ENCODE measurements at regions of chr1 and their contacts with region 1.

Region 1: DNA sequence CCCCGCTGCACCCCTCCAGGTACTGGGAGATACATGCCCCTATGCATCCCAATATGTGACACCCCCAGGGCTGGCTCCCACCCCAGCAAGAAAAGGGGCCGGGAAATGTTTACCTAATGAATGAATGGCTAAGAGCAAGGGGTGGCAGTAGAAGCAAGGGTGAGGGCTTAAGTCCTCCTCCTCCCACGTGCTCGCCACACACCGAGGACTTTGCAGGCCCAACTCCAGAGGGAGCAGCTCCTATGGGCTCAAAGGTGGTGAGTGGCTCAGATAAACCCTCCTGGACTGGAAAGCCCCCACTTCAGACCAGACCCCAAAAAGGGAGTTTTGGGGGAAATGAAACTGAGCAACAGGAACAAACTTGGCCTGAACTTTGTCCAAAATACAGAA is 11.4 kb downstream of the SLC45A3 start:
- DNase-seq: no peak
- H3K4me3 ChIP-seq: no peak overlapping the region
- H3K27ac ChIP-seq: no peak overlapping the region
- H3K27me3 ChIP-seq: no peaks in the 10 kb centered on the region
- CTCF ChIP-seq: peak; percentile 22

Region 2: DNA sequence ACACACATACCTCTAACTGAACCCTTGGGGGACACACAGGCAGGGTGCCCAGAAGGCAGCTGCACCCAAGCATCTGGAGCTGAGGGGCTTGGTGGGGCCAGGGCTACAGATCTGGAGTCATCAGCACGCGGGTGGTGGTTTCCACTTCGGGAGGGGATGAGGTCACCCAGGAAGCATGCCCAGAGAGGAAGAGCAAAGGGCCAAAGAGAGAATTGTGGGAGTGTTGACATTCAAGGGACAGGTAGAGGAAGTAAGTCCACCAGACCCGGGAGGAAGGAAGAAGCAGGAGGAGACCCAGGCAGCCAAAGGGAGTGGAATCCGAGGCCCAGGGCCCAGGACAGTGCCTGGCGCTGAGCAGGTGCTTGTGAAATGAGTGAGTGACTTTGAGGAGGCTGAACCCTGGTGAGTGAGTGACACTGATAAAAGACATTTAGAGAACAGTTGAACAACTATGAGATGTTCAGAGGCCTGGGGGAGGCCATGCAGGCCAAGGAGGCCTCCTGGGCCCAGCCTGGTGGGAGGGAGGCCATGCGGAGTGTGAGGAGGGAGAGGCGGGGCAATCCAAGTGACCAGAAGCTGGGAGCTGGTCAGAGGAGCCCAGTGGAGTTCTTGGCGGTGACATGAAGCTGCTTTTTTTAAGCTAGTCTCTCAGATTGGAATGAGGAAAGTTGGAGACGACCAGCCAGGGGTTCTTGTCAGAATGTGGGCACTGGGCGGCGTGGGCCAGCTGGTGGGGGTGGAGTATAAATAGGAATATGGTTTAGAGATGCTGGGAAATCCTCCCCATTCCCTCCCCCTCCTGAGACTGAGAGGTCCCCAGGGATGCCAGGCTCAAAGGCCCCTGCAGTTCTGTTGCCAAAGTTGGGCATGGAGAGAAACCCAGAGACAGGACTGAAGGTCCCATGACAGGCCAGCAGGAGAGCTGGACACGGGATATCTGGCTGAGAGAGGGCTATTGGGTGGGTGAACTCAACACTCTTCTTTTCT is 156.6 kb before region 1 on chr1:
- in situ Hi-C with region 1: no loop called
- DNase-seq: no peak
- H3K4me3 ChIP-seq: no peak overlapping the region
- H3K27ac ChIP-seq: no peak overlapping the region
- H3K27me3 ChIP-seq: no peaks in the 10 kb centered on the region
- CTCF ChIP-seq: no peak

Region 3: DNA sequence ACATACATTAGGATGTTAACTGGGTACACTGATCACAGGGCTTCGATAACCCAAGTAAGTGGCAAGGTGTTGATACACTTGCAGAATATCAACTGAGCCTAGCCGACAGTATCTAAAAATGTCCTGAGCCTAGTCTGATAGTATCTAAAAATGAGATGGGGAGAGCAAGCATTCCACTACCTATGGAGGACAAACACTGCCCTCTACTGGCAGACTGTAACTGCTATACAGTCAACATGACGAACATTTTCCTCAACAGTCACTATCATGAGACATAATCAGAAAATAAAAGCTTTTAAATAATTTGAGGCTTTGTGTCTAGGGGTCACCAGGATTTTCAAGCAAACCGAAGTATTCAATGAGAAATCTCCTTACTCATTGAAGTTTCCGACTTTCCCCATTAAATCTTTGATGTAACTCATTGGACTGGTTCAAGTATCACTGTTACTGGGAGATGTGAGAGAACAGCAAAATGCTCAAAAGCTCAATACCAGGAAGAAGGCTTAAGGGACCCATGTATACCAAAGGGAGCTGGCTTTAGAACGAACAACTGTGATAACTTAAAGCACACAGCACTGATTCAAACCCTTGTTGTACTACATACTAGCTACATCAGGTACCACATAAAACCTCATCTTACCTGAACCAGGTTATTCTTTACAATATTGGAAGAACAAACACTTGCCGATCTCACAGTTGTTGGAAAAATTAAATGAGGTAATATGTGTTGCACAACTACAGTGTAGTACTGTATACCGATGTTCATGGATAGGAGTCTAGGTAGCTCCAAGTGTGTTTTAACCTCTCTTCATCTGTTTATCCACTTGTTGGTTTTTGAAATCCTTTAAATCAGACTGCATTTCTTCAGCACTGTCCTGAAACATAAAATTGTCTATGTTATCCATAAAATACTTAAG is 42.4 kb after region 1 on chr1:
- in situ Hi-C with region 1: loop called (anchors 10 kb)
- DNase-seq: peak; percentile 84
- H3K4me3 ChIP-seq: no peak overlapping the region
- H3K27ac ChIP-seq: no peak overlapping the region
- H3K27me3 ChIP-seq: no peaks in the 10 kb centered on the region
- CTCF ChIP-seq: peak; percentile 84